HCT116 (cell line): ENCODE measurements at regions of chr17 and their contacts with region 1.

Region 1: DNA sequence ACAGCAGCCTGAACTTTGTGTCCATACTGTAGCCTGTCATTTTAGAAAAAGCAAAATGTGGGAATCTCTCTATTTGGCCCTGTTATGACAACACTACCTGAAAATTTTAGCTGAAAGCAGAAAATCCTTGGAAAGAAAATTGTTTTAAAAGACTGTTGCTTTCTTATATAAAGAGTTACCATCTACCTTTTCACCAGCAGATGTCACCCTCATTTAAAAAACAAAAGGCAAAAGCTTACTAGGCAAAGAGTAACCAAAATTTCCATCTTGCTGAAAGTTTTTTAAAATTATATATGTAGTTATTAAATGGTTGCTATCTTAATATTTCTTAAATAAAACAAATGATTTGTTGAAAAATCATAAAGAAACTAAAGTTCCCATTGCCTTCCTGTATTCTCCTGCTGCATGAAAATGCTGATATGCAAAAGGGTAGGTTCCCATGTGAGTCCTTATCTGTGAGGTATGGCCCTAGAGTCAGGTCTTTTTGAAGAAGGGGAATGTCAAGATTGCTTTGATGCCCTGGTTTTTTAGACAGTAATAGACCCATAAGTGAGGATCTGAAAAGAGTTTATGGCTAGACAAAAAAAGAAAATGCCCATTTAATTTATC is 61.0 kb downstream of the TNRC6C start:
- DNase-seq: peak; percentile 33
- ATAC-seq: peak; percentile 71; the same call in 1 of the 2 replicates
- H3K4me3 ChIP-seq: no peak overlapping the region
- H3K27ac ChIP-seq: no peak overlapping the region
- H3K4me1 ChIP-seq: no peaks in the 10 kb centered on the region
- H3K27me3 ChIP-seq: no peaks in the 10 kb centered on the region
- CTCF ChIP-seq: peak; percentile 58 to 82 (median 65); a peak in 5 of 6 replicates
- POLR2A ChIP-seq: no peak
- RAD21 ChIP-seq: peak; percentile 83

Region 2: DNA sequence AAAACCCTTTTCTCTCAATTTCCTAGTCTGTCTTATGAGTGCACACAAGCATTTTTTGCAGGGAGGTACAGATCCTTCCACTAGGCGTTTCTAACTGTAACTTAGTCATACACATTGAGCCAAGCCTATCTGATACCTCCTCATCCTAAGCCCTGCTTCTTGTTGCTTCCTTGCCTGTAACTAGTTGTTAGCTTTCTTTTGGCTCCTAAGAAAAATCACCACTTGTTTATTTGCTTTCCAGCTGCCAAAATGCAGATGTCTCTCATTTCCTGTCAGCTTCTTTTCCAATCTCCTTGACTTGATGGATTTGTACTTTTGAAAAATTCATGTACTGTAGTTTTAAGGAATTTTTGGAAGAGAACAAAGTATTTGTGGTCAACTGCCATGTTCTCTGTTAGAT is 12.7 kb after region 1 on chr17:
- CTCF ChIA-PET with region 1: interaction called, 30 read pairs
- POLR2A ChIA-PET with region 1: interaction called, 3 read pairs
- RAD21 ChIA-PET with region 1: no interaction called
- intact Hi-C with region 1: no loop called
- DNase-seq: no peak
- ATAC-seq: no peak
- H3K4me3 ChIP-seq: no peak overlapping the region
- H3K27ac ChIP-seq: no peak overlapping the region
- H3K4me1 ChIP-seq: peaks cover 7 to 29% of the 10 kb centered on the region in 2 experiments
- H3K27me3 ChIP-seq: no peaks in the 10 kb centered on the region
- CTCF ChIP-seq: no peak
- POLR2A ChIP-seq: no peak
- RAD21 ChIP-seq: no peak

Region 3: GRCh38 chr17:78040440-78041385 is 21.2 kb after region 1 on chr17:
- CTCF ChIA-PET with region 1: interaction called, 17 read pairs
- POLR2A ChIA-PET with region 1: interaction called, 5 read pairs
- RAD21 ChIA-PET with region 1: no interaction called
- intact Hi-C with region 1: no loop called
- DNase-seq: peak; percentile 56
- ATAC-seq: peak; percentile 91
- H3K4me3 ChIP-seq: peak overlapping the region; percentile 56 to 67
- H3K27ac ChIP-seq: peak overlapping the region; percentile 75
- H3K4me1 ChIP-seq: peaks cover 17 to 30% of the 10 kb centered on the region in 2 experiments
- H3K27me3 ChIP-seq: no peaks in the 10 kb centered on the region
- CTCF ChIP-seq: peak in 2 of 3 experiments; percentile 15 to 27; a peak in 2 of 6 replicates
- POLR2A ChIP-seq: peak; percentile 63
- RAD21 ChIP-seq: no peak; the same call in 1 of the 2 replicates

Region 4: DNA sequence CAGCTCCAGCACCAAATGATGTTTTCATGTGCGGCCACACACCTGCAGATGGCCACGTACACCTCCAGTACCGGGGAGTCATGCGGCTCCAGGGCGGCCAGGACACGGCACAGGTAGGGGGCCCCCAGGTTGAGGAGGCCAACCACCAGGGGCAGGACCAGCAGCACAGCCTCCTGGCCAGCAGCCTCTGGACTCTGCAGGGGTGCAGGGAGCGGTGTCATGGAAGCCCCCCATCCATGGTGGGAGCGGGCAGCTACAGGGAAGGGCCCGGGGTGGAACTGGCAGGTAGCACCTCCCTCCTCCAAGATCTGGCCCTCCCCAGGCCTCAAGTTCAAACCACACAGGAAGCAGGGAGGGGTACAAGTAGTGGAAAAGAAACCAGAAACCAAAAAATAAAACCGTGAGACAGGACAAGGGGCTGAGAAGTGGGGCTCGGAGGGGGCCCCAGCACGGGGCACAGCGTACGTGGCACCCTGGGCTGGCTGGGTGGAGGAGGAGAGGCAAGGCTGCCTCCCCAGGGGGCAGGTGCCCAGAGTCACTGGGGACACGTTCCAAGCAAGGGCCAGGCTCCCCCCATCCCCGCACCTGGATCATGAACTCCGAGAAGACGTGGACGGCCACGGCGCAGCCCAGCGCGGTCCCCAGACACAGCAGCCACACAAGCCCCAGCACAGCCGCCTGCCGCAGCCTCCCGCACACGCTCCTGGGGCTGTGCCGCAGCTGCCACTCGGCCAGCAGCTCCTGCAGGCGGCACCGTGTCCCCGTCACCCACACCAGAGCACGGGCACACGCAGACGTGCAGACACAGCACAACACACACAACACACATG is 101.7 kb after region 1 on chr17:
- CTCF ChIA-PET with region 1: no interaction called
- POLR2A ChIA-PET with region 1: no interaction called
- RAD21 ChIA-PET with region 1: no interaction called
- intact Hi-C with region 1: no loop called
- DNase-seq: no peak
- ATAC-seq: no peak
- H3K4me3 ChIP-seq: no peak overlapping the region
- H3K27ac ChIP-seq: no peak overlapping the region
- H3K4me1 ChIP-seq: no peaks in the 10 kb centered on the region
- H3K27me3 ChIP-seq: no peaks in the 10 kb centered on the region
- CTCF ChIP-seq: no peak
- POLR2A ChIP-seq: no peak
- RAD21 ChIP-seq: no peak

Region 5: DNA sequence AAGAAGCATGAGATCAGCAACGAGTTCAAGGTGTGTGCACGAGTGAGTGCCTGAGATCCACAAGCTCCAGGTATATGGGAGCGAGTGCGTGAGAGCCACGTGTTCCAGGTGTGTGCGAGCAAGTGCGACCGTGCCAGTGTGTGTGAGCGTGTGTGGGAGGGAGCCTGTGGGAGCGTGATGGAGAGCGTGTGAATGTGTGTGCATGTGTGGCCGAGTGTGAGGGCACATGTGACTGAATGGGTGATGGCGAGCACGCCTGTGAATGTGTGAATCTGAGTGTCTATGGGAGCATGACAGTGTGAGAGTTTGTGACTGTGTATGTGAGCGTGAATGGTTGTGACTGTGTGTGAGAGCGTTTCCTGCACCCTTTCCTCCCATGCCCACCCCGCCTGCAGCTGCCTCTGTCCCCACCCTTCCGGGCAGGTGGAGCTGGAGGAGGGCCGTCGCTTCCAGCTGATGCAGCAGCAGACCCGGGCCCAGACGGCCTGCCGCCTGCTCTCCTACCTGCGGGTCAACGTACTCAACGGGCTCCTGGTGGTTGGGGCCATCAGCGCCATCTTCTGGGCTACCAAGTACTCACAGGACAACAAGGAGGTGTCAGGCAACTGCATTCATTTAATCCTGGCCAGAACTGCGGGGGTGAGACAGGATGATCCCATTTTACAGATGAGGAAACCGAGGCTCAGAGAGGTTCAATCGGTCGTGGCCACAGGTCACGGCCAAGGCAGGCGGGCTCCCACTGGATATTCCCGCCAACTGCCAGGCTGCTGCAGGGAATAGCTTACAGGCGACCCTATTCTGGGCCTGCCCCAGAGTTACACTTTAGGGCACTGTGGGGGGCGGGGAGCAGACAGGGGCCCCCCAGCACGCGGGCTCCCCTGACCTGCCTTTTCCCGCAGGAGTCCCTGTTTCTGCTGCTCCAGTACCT is 114.8 kb after region 1 on chr17:
- CTCF ChIA-PET with region 1: no interaction called
- POLR2A ChIA-PET with region 1: no interaction called
- RAD21 ChIA-PET with region 1: no interaction called
- intact Hi-C with region 1: loop called (anchors 1 kb)
- DNase-seq: peak; percentile 70
- ATAC-seq: peak; percentile 49
- H3K4me3 ChIP-seq: no peak overlapping the region
- H3K27ac ChIP-seq: no peak overlapping the region; the same call in 1 of the 2 replicates
- H3K4me1 ChIP-seq: peaks cover 43 to 76% of the 10 kb centered on the region in 2 experiments
- H3K27me3 ChIP-seq: no peaks in the 10 kb centered on the region
- CTCF ChIP-seq: peak in 2 of 3 experiments; percentile 76 to 81; a peak in 4 of 6 replicates
- POLR2A ChIP-seq: no peak
- RAD21 ChIP-seq: no peak

Region 6: GRCh38 chr17:78497115-78497540 is 477.7 kb after region 1 on chr17:
- CTCF ChIA-PET with region 1: no interaction called
- POLR2A ChIA-PET with region 1: no interaction called
- RAD21 ChIA-PET with region 1: no interaction called
- intact Hi-C with region 1: no loop called
- DNase-seq: peak; percentile 75
- ATAC-seq: peak; percentile 95
- H3K4me3 ChIP-seq: no peak overlapping the region
- H3K27ac ChIP-seq: no peak overlapping the region
- H3K4me1 ChIP-seq: no peaks in the 10 kb centered on the region
- H3K27me3 ChIP-seq: no peaks in the 10 kb centered on the region
- CTCF ChIP-seq: peak; percentile 85 to 91 (median 89)
- POLR2A ChIP-seq: no peak
- RAD21 ChIP-seq: peak; percentile 99